AG04449 (cell line): ENCODE measurements at regions of chr11 and their contacts with region 1.

Region 1: GRCh38 chr11:124070915-124071635 is 29.9 kb upstream of the OR10G7 start:
- DNase-seq: peak; percentile 23
- H3K4me3 ChIP-seq: no peak overlapping the region
- CTCF ChIP-seq: peak; percentile 64

Region 2: GRCh38 chr11:124081483-124081882 is 10.4 kb after region 1 on chr11:
- CTCF ChIA-PET with region 1: interaction called, 10 read pairs
- POLR2A ChIA-PET with region 1: no interaction called
- DNase-seq: no peak
- H3K4me3 ChIP-seq: no peak overlapping the region
- CTCF ChIP-seq: no peak

Region 3: DNA sequence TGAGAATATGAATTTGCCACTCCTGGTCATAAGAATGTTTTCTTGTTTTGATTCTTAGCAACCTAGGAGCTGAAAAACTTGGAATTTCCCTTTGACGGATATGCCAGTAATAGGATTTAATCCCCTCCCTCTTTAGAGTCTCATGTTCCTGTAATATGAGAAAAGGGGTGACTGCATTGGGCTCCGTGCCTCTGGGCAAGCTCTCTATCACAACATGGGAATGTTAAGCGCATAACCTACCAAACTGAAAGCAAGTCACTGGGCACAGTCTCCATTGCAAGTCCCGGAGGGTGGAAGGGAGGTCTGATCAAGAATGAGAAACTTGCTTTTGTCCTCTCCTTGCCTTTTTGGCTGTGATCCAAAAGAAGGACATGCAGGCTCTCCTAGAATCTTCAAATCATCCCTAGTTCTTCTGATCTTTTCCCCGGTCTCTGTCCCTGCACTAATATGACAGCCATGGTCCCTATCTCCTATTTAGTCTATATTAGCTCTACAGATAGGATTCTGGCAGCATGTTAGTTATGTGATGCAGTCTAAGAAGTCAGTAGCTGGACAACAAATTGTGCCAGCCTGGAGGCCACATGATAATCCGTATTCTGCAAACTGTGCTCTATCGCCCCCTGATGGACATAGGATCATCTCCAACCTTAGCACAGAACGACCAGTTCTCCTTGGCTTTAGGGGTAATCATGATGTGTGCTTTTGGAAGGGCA is 123.8 kb after region 1 on chr11:
- CTCF ChIA-PET with region 1: interaction called, 132 read pairs
- POLR2A ChIA-PET with region 1: no interaction called
- DNase-seq: no peak
- H3K4me3 ChIP-seq: no peak overlapping the region
- CTCF ChIP-seq: peak; percentile 87